Heart left ventricle (tissue), 16 donors: ENCODE measurements at regions of chr1 and their contacts with region 1.

Region 1: GRCh38 chr1:156601122-156601830 is at the start of gene GPATCH4:
- DNase-seq: peak; percentile 78 to 80 (median 79)
- ATAC-seq: peak; percentile 84 to 89 (median 86)
- H3K4me3 ChIP-seq: peak within 1 kb of the TSS; percentile 56 to 86 (median 70)
- H3K27ac ChIP-seq: peak within 1 kb of the TSS; percentile 24 to 85 (median 72)
- H3K4me1 ChIP-seq: peaks cover 3 to 27% (median 14%) of the 10 kb centered on the region in 12 donors
- H3K27me3 ChIP-seq: no peaks in the 10 kb centered on the region
- CTCF ChIP-seq: no peak
- POLR2A ChIP-seq: peak in 1 of 2 donors; percentile 29
- total RNA-seq, gene GPATCH4: 8.8 to 30.1 (median 12.6) TPM

Region 2: GRCh38 chr1:156383023-156383422 is 218.3 kb before region 1 on chr1:
- intact Hi-C with region 1: loop called in 7 of 10 experiments (anchors 5 to 10 kb)
- DNase-seq: peak; percentile 31 to 72 (median 53)
- ATAC-seq: peak; percentile 61 to 93 (median 86)
- H3K4me3 ChIP-seq: no peak overlapping the region
- H3K27ac ChIP-seq: no peak overlapping the region
- H3K4me1 ChIP-seq: peaks cover 0 to 4% (median under 1%) of the 10 kb centered on the region in 12 donors
- H3K27me3 ChIP-seq: peaks cover 0 to 22% (median 6%) of the 10 kb centered on the region in 9 donors
- CTCF ChIP-seq: peak; percentile 61 to 80 (median 74)
- POLR2A ChIP-seq: no peak

Region 3: GRCh38 chr1:156456622-156457465 is 144.4 kb before region 1 on chr1:
- intact Hi-C with region 1: loop called in 6 of 10 experiments (anchors 1 to 5 kb)
- DNase-seq: peak; percentile 97 to 99 (median 98)
- ATAC-seq: peak; percentile 94 to 96 (median 95)
- H3K4me3 ChIP-seq: peak overlapping the region; percentile 42 to 73 (median 62)
- H3K27ac ChIP-seq: peak overlapping the region; percentile 98 to 100 (median 98)
- H3K4me1 ChIP-seq: peaks cover 0 to 30% (median 6%) of the 10 kb centered on the region in 12 donors
- H3K27me3 ChIP-seq: no peaks in the 10 kb centered on the region
- CTCF ChIP-seq: no peak
- POLR2A ChIP-seq: peak; percentile 35 to 71

Region 4: GRCh38 chr1:156465747-156466365 is 135.4 kb before region 1 on chr1:
- intact Hi-C with region 1: loop called in 1 of 10 experiments (anchors 5 kb)
- DNase-seq: no peak
- ATAC-seq: peak in 3 of 4 donors; percentile 5 to 16 (median 12)
- H3K4me3 ChIP-seq: no peak overlapping the region
- H3K27ac ChIP-seq: peak overlapping the region; percentile 13 to 89 (median 60)
- H3K4me1 ChIP-seq: peaks cover 14 to 79% (median 51%) of the 10 kb centered on the region in 12 donors
- H3K27me3 ChIP-seq: no peaks in the 10 kb centered on the region
- CTCF ChIP-seq: peak in 2 of 12 donors; percentile 11 to 12
- POLR2A ChIP-seq: no peak

Region 5: GRCh38 chr1:156480411-156481192 is 120.7 kb before region 1 on chr1:
- intact Hi-C with region 1: loop called in 1 of 10 experiments (anchors 10 kb)
- DNase-seq: peak; percentile 66 to 86 (median 74)
- ATAC-seq: peak in 3 of 4 donors; percentile 4 to 48 (median 22)
- H3K4me3 ChIP-seq: no peak overlapping the region
- H3K27ac ChIP-seq: peak overlapping the region; percentile 9 to 89 (median 49)
- H3K4me1 ChIP-seq: peaks cover 7 to 98% (median 80%) of the 10 kb centered on the region in 12 donors
- H3K27me3 ChIP-seq: no peaks in the 10 kb centered on the region
- CTCF ChIP-seq: peak; percentile 56 to 78 (median 63)
- POLR2A ChIP-seq: no peak

Region 6: DNA sequence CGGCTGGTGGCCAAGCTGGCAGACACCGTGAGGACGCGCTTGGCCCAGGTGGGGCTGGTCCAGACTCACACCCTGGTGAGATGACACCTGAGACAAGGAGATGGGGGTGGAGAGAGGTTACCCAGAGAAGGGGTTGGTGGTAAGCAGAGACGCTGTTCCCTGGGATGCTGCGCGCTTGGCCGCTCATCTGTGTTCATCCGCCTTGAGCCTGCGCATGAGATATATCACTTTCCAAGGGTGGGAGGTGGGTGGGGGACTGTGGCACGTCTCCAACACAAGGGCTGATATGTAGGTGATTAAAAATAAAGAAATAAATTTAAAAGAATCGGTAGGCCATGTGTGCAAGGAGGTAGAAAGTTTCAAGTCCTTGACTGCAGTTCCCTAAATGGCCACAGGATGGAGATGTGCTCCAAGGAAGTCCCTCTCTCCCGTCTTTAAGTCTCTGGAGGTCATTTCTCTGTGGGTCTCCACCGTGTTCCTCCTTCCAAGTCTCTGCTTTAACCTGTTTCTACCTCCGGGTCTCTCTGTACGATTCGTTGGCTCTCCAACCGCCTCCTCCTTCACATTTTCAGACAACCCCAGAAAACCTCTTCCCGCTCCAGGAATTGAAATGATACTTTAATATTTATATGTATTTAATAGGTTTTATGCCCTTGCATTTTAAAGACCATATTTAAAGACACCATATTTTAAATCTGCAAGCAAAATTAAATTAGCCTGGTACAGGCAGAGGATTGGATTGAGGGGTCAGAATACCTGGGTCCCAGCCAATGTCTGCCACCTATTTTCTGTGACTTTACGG is 17.3 kb before region 1 on chr1:
- intact Hi-C with region 1: loop called in 1 of 10 experiments (anchors 2 kb)
- DNase-seq: peak in 4 of 5 donors; percentile 63 to 70 (median 66)
- ATAC-seq: peak in 3 of 4 donors; percentile 27 to 55 (median 54)
- H3K4me3 ChIP-seq: no peak overlapping the region
- H3K27ac ChIP-seq: no peak overlapping the region
- H3K4me1 ChIP-seq: peaks cover 0 to 7% (median 0%) of the 10 kb centered on the region in 12 donors
- H3K27me3 ChIP-seq: no peaks in the 10 kb centered on the region
- CTCF ChIP-seq: peak; percentile 86 to 98 (median 93)
- POLR2A ChIP-seq: no peak

Region 7: GRCh38 chr1:156659994-156660751 is 58.9 kb after region 1 on chr1:
- intact Hi-C with region 1: no loop called
- DNase-seq: peak; percentile 97 to 98 (median 98)
- ATAC-seq: peak; percentile 81 to 88 (median 83)
- H3K4me3 ChIP-seq: peak overlapping the region in 10 of 12 donors; percentile 19 to 46 (median 42)
- H3K27ac ChIP-seq: peak overlapping the region; percentile 53 to 99 (median 96)
- H3K4me1 ChIP-seq: peaks cover 26 to 82% (median 69%) of the 10 kb centered on the region in 12 donors
- H3K27me3 ChIP-seq: peaks cover 0 to 21% (median 0%) of the 10 kb centered on the region in 9 donors
- CTCF ChIP-seq: peak; percentile 94 to 100 (median 98)
- POLR2A ChIP-seq: peak in 1 of 2 donors; percentile 33

Region 8: DNA sequence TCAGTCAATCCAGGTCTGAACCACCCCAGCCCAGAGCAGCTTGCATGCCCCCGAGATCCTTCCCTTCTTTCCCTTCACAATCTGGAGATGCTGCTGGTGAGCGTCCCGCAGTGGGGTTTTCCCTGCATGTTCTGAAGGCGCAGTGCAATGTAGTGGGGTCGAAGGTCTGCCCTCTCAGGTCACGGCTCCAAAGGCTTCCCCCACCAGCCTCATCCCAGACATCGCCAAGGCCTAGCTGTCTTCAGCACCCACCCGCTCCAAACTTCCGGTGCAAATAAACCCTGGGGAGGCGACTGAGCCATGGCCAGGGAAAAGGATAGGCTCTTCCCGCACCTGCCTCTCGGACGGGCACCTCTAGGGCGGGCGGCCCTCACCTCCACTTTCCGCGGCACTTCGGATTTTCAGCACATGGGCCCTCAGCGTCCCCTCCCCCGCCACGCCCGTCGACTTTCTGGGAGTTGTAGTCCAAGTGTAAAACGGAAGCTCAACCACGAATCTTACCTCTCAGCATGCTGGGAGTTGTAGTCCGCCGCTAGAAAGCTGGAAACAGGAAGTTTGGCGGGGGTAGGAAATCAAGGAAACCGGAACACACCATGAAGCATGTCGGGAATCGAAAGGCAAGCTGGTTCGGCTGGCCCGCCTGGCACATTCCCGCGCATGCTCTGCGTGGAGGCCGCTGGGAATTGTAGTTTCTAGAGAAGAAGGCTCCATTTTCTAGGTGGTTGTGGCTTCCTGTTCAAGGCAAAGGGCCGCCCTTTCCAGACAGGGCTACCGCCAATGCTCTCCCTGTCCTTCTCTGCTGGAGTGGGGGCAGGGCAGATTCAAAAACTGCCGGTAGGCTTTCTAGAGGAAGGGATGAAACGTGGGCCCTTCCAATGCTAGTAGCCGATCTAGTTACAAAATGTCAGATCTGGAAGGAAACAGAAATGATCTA is 139.7 kb after region 1 on chr1 and contains the start of gene MRPL24:
- intact Hi-C with region 1: no loop called
- DNase-seq: peak; percentile 97 to 98 (median 98)
- ATAC-seq: peak; percentile 92 to 97 (median 94)
- H3K4me3 ChIP-seq: peak within 1 kb of the TSS; percentile 41 to 94 (median 74)
- H3K27ac ChIP-seq: peak within 1 kb of the TSS; percentile 66 to 94 (median 88)
- H3K4me1 ChIP-seq: peaks cover 6 to 34% (median 27%) of the 10 kb centered on the region in 12 donors
- H3K27me3 ChIP-seq: no peaks in the 10 kb centered on the region
- CTCF ChIP-seq: no peak
- POLR2A ChIP-seq: peak in 1 of 2 donors; percentile 47
- total RNA-seq, gene MRPL24: 74.8 to 117 (median 79.6) TPM